Cardiac septum (tissue), 1 donor: ENCODE measurements at regions of chr1 and their contacts with region 1.

Region 1: GRCh38 chr1:160101037-160101716 is 2.8 kb upstream of the IGSF8 start:
- DNase-seq: peak; percentile 86

Region 2: DNA sequence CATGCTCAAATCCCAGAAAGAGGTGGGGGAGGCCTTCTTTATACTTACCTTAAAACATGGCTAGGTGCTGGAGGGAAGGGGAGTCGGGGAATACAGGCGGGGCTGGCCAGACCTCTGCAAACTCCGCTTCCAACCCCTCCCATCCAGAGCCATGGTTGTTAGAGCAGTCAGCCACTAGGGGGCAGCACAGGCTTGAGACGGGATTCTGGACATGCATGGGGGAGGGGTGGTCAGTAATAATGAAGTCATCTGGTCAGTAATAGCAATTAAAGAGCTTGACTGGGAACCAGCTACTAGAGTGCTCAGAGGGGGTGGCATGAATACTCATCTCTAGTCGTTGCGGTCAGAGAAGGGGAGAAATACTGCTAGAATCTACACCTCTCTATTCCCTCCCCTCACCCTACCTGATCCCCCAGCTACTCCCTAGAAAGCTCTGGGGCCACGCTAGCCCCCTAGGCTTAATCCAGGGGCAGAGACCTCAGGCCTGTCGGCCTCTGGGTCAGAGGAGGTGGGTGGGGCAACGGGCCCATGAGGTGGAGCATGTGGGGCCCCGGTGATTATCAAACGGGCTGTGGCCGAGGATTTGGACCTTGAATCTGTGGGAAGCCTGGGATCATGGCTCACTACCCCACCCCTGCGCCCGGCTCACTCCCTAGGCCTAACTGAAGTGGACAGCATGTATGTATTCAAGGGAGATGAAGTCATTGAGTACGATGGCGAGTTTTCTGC is 92.1 kb after region 1 on chr1:
- intact Hi-C with region 1: loop called (anchors 1 kb)
- DNase-seq: peak; percentile 89

Region 3: DNA sequence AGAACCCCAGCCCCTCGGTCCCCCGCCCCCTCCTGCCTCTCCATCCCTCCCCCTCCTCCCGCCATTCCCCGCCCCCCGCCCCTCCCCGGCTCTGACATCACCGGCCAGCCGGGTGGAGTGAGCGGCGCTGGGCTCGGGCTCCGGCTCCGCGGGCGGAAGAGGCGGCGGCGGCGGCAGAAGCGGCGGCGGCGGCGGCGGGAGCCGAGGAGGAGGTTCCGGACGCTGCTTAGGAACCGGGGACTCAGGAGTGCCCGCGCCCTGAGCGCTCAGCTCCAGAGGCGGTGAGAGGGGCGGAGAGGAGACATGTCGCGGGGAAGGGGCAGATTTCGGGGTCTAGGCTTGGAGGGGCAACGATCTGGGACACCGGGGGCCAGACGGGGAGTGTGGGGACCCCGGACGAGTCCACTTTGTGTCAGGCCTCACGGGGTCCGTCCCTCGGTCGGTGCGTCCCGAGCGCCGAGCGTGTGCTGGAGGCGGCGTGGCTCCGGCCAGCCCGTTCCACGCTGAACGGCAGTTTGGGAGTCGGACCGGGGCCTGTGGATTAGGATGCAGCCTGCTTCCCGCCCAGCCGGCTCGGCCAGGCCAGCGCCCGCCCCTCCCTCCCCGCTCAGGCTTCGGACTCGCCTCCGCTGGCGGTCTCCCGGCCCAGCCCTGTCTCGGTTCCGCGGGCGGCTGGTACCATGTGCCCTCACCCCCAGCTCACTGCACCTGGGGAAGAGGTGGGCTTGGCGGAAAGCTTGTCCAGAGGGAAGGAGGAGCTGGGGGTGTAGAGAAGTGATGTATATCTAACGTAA is 104.3 kb after region 1 on chr1 and contains the start of gene PEA15:
- intact Hi-C with region 1: loop called (anchors 5 kb)
- DNase-seq: peak; percentile 84
- total RNA-seq, gene PEA15: 317 TPM

Region 4: GRCh38 chr1:160219062-160219929 is 118.1 kb after region 1 on chr1:
- intact Hi-C with region 1: loop called (anchors 1 kb)
- DNase-seq: no peak

Region 5: GRCh38 chr1:160251687-160252526 is 150.7 kb after region 1 on chr1:
- intact Hi-C with region 1: loop called (anchors 2 kb)
- DNase-seq: no peak

Region 6: DNA sequence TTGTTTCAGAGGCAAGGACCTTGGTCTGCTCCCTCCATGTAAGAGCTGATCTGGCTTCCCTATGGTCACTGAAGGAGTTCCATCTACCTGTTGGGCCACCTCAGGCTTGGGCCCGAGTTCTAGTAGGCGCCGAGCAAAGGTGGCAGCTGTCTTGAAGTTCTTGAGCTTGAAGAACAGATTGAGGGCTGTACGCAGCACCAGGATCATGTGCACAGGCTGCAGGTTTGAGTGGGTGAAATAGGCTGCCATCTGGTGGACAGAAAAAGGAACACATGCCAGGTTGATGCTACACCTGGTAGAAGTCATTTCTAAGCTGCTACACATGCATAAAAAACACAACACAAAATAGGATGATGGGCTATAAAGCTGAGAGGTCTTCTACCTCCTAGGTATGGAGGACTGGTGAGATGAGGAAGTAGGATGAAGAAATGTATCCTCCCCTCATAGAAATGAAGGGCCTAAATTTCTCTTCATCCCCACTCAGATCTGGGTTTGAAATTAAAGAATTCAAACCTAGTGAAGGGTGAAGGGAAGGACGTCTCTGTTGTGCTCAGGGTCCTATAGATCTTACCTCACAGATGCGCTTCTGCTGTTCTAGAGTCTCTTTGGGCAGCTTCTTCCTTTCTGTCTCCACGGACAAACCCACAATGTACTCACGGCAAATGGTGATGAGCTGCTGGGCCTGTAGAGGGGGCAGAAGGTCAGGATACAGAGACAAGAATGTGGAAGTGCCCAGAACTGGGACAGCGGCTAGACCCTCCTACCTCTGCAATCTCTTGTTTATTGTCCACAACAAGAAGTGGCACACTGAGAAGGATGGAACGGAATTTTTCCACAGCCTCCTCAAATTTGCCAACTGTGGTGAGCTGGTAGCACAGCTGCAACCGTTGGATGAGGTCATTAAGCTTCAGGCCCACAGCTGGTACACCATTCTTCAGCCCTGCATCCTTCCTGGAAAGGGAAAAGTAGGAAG is 190.4 kb after region 1 on chr1:
- intact Hi-C with region 1: loop called (anchors 2 kb)
- DNase-seq: peak; percentile 79

Region 7: DNA sequence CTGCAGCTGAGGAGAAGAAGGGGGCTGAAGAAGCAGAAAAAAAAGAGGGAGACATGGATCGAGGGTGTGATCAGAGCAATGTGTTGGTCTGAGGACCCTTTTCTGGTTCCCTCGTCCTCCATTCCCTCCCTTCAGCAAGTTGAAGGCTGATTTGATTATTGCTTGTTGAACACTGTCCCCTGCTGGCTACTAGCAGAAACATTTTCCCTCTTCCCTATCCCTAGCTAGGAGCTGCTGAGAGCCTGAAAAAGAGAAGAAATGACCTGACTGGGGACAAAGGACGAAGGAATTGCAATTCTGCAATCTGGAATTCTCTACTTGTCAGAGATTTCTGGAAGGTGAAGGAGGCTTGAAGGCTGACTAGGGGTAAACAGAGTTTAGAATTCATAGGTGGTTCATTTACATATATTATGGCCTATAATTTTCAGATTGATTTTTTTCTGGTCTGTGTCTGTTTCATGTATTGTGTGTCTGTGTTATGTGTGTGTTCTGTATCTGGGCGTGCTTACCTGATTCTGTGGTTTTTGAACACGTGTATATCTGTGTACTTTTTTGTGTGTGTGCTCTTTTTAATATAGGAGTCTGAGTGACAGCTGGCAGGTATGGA is 275.5 kb after region 1 on chr1:
- intact Hi-C with region 1: loop called (anchors 5 kb)
- DNase-seq: no peak